Heart right ventricle (tissue), 16 donors: ENCODE measurements at regions of chr5 and their contacts with region 1.

Region 1: GRCh38 chr5:178075840-178076548 is 37.3 kb upstream of the N4BP3 start:
- DNase-seq: peak; percentile 67 to 69
- ATAC-seq: peak; percentile 76 to 90 (median 88)
- H3K4me3 ChIP-seq: no peak overlapping the region
- H3K27ac ChIP-seq: no peak overlapping the region
- H3K4me1 ChIP-seq: peaks cover 0 to 6% (median 0%) of the 10 kb centered on the region in 9 donors
- H3K27me3 ChIP-seq: peaks cover 0 to 33% (median 27%) of the 10 kb centered on the region in 7 donors
- CTCF ChIP-seq: peak; percentile 75 to 93 (median 91)

Region 2: DNA sequence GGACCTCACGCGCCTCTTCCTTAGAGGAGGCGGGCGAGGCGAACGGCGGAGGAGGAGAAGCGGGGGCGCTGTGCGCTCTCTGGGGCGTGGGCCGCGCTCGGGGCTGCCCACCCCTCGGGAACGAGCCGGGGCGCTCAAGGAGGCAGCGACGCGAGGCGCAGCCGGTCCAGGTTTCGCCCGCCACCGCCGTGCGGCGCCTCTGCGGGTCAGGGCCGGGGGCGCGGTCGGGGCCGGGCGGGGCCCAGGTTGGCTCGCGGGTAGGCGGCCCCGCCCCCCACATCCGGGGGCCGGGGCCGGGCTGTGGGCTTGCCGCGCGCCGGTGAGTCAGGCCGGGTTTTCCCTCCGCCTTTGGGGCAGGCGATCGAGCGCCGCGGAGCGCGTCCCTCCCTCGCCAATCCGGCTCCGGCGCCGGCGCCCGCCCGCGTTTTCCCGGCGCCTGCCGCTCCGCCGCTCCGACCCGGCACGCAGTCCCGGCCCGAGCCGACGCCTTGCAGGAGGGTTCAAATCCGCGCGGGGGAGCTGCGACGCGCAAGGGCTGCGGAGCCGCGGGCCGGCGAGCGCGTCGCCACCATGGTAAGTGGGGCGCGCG is 37.3 kb after region 1 on chr5 and contains the start of gene N4BP3:
- intact Hi-C with region 1: loop called in 1 of 10 experiments (anchors 5 kb)
- DNase-seq: peak; percentile 57 to 60
- ATAC-seq: peak; percentile 60 to 85 (median 67)
- H3K4me3 ChIP-seq: peak within 1 kb of the TSS; percentile 52 to 70 (median 62)
- H3K27ac ChIP-seq: peak within 1 kb of the TSS; percentile 43 to 86 (median 80)
- H3K4me1 ChIP-seq: peaks cover 9 to 55% (median 40%) of the 10 kb centered on the region in 9 donors
- H3K27me3 ChIP-seq: peaks cover 0 to 60% (median 40%) of the 10 kb centered on the region in 7 donors
- CTCF ChIP-seq: peak in 1 of 9 donors; percentile 3
- total RNA-seq, gene N4BP3: 1.1 to 5.5 (median 2.5) TPM

Region 3: GRCh38 chr5:178146020-178146820 is 70.2 kb after region 1 on chr5:
- intact Hi-C with region 1: loop called in 9 of 10 experiments (anchors 1 to 5 kb)
- DNase-seq: peak; percentile 48 to 51
- ATAC-seq: peak; percentile 26 to 59 (median 44)
- H3K4me3 ChIP-seq: no peak overlapping the region
- H3K27ac ChIP-seq: no peak overlapping the region
- H3K4me1 ChIP-seq: peaks cover 0 to 16% (median 8%) of the 10 kb centered on the region in 9 donors
- H3K27me3 ChIP-seq: no peaks in the 10 kb centered on the region
- CTCF ChIP-seq: peak; percentile 44 to 76 (median 69)

Region 4: DNA sequence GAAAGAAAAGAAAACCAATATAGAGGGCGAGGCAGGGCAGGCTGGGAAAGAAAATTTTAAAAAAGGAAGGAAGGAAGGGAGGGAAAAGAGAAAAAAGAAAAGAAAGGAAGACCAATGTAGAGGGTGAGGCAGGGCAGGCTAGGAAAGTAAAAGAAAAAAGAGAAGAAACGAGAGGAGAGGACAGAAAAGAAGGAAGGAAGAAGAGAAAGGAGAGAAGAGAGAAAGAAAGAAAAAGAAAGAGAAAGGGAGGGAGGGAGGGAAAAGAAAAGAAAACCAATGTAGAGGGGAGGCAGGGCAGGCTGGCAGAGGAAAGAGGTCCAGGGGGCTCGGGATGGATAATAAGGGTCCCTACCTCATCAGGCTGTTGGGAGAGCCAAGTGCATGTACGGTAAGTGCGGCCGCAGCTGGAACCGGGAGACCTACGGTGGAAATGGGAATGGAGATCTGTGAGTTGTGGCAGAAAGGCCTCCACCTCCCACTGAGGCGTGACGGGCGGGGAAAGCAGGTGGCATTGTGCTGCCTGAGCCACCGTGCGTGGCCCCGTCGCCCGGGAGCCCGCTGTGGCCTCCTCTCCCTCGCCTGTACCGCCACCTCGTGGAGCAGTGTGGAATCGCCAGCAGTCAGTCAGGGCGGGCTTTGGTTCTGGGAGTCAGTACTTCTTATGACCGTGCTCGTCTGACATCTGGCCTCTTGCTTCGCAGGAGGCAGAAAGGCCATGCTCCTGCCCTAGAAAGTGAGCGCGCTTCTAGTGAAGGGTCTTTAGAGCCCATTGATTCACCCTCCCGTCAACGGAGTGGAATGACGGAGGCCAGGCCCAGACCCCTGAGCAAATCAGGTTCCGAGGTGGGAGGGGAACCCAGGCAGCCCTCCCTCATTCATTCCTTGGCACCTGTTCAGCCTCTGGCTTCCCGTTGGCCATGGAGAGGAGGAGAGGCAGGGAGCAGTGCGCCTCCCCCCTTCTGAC is 88.1 kb after region 1 on chr5:
- intact Hi-C with region 1: loop called (anchors 1 to 5 kb)
- DNase-seq: peak; percentile 83 to 88
- ATAC-seq: peak; percentile 89 to 98 (median 94)
- H3K4me3 ChIP-seq: peak overlapping the region in 6 of 10 donors; percentile 10 to 29 (median 26)
- H3K27ac ChIP-seq: no peak overlapping the region
- H3K4me1 ChIP-seq: peaks cover 0 to 10% (median 8%) of the 10 kb centered on the region in 9 donors
- H3K27me3 ChIP-seq: peaks cover 0 to 43% (median 33%) of the 10 kb centered on the region in 7 donors
- CTCF ChIP-seq: peak; percentile 94 to 99 (median 99)

Region 5: DNA sequence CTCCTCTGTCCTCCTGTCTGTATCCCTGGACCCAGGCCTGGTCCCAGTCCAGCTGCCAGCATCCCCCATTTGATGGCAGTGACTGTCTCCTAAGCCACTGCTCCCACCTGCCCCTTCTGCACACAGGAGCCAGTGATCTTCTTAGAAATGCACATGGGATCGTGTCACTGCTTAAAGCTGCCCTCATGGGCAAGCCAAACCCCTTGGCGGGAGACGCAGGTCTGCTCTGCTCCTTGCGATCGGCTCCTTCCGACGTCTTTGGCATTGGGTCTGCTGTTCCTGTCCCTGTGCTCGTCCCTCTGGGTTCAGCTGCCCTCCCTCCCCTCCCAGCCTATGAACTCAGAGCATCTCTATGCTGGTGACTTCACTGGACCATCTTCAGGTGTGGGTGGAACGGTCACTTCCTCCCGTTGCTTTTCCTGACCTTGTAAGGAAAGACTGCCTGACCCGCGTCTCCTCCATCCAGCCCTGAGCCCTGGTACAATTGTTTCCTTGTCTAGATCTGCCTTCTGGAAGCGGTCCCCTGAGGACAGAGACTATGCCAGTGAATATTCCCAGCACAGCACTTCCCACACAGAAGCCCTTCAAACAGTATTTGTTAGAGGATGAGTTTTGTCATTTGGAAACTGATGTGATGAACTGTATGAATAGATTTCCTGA is 1100.7 kb after region 1 on chr5:
- intact Hi-C with region 1: loop called in 1 of 10 experiments (anchors 5 kb)
- DNase-seq: no peak
- ATAC-seq: no peak
- H3K4me3 ChIP-seq: no peak overlapping the region
- H3K27ac ChIP-seq: no peak overlapping the region
- H3K4me1 ChIP-seq: no peaks in the 10 kb centered on the region
- H3K27me3 ChIP-seq: peaks cover 0 to 19% (median 0%) of the 10 kb centered on the region in 7 donors
- CTCF ChIP-seq: no peak